Thyroid gland (tissue), 4 donors: ENCODE measurements at regions of chr22 and their contacts with region 1.

Region 1: GRCh38 chr22:26457661-26458272 is 25.8 kb downstream of the HPS4 start:
- DNase-seq: no peak
- H3K4me3 ChIP-seq: no peak overlapping the region
- H3K27ac ChIP-seq: no peak overlapping the region
- H3K4me1 ChIP-seq: no peaks in the 10 kb centered on the region
- H3K27me3 ChIP-seq: no peaks in the 10 kb centered on the region
- CTCF ChIP-seq: no peak
- POLR2A ChIP-seq: no peak

Region 2: DNA sequence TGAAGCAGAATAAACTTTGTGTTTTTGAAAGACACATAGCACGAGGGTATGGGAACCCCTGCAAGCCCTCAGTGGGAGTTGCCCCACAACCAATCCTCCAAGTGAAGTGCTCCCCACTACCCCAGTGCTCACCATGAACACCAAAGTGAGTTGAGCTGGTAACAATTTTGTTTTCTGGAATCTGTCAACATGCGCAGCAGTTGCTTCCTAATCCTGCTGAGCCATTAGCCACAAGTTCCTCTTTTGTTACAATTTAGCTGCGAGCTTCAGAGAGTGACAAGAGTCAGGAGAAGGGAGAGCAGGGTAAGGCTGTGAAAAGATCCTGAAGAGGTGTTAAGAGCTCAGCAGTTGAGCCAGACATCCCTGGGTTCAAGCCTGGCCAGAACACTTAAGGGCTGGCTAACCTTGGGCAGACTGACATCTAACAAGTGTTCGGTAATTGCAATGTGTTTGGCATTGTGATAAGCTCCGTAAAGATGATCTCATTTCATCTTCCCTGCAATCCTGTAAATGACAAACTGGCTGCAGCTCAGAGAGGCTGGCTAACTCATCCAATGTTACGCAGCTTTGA is 52.8 kb before region 1 on chr22:
- intact Hi-C with region 1: loop called (anchors 5 kb)
- DNase-seq: no peak
- H3K4me3 ChIP-seq: no peak overlapping the region
- H3K27ac ChIP-seq: no peak overlapping the region
- H3K4me1 ChIP-seq: no peaks in the 10 kb centered on the region
- H3K27me3 ChIP-seq: no peaks in the 10 kb centered on the region
- CTCF ChIP-seq: no peak
- POLR2A ChIP-seq: no peak

Region 3: GRCh38 chr22:26550498-26551033 is 92.8 kb after region 1 on chr22:
- intact Hi-C with region 1: no loop called
- DNase-seq: peak; percentile 95 to 96
- H3K4me3 ChIP-seq: no peak overlapping the region
- H3K27ac ChIP-seq: peak overlapping the region; percentile 83 to 86 (median 86)
- H3K4me1 ChIP-seq: peaks cover 79 to 98% of the 10 kb centered on the region in 2 donors
- H3K27me3 ChIP-seq: no peaks in the 10 kb centered on the region
- CTCF ChIP-seq: no peak
- POLR2A ChIP-seq: no peak